ENCODE measurements at regions of chr18 and their contacts with region 1.

Region 1: GRCh38 chr18:70195852-70196434 is 9.5 kb downstream of the RTTN start:
- DNase-seq: peak in 4 of 14 experiments; percentile 19 to 49 (median 38)
- ATAC-seq: peak; percentile 52
- H3K4me3 ChIP-seq: no peak overlapping the region
- H3K4me3 Mint-ChIP-seq: no peak overlapping the region
- H3K27ac ChIP-seq: no peak overlapping the region
- H3K27ac Mint-ChIP-seq: no peak overlapping the region
- H3K4me1 ChIP-seq: no peaks in the 10 kb centered on the region
- H3K4me1 Mint-ChIP-seq: peaks cover 12% of the 10 kb centered on the region
- H3K27me3 ChIP-seq: no peaks in the 10 kb centered on the region
- H3K27me3 Mint-ChIP-seq: no peaks in the 10 kb centered on the region
- CTCF ChIP-seq: peak; percentile 69

Region 2: GRCh38 chr18:70154591-70155194 is 41.2 kb before region 1 on chr18:
- CTCF ChIA-PET with region 1: no interaction called
- POLR2A ChIA-PET with region 1: no interaction called
- intact Hi-C with region 1: no loop called
- DNase-seq: no peak
- ATAC-seq: no peak
- H3K4me3 ChIP-seq: no peak overlapping the region
- H3K4me3 Mint-ChIP-seq: no peak overlapping the region
- H3K27ac ChIP-seq: no peak overlapping the region
- H3K27ac Mint-ChIP-seq: no peak overlapping the region
- H3K4me1 ChIP-seq: no peaks in the 10 kb centered on the region
- H3K4me1 Mint-ChIP-seq: peaks cover 13% of the 10 kb centered on the region
- H3K27me3 ChIP-seq: no peaks in the 10 kb centered on the region
- H3K27me3 Mint-ChIP-seq: no peaks in the 10 kb centered on the region
- CTCF ChIP-seq: no peak

Region 3: GRCh38 chr18:70421471-70422390 is 225.8 kb after region 1 on chr18:
- CTCF ChIA-PET with region 1: no interaction called
- POLR2A ChIA-PET with region 1: no interaction called
- intact Hi-C with region 1: no loop called
- DNase-seq: peak in 3 of 14 experiments; percentile 18 to 68 (median 61)
- ATAC-seq: no peak
- H3K4me3 ChIP-seq: no peak overlapping the region
- H3K4me3 Mint-ChIP-seq: no peak overlapping the region
- H3K27ac ChIP-seq: no peak overlapping the region
- H3K27ac Mint-ChIP-seq: no peak overlapping the region
- H3K4me1 ChIP-seq: peaks cover 2% of the 10 kb centered on the region
- H3K4me1 Mint-ChIP-seq: no peaks in the 10 kb centered on the region
- H3K27me3 ChIP-seq: no peaks in the 10 kb centered on the region
- H3K27me3 Mint-ChIP-seq: peaks cover 8% of the 10 kb centered on the region
- CTCF ChIP-seq: no peak

Region 4: GRCh38 chr18:70454704-70455322 is 258.9 kb after region 1 on chr18:
- CTCF ChIA-PET with region 1: interaction called, 3 read pairs
- POLR2A ChIA-PET with region 1: no interaction called
- intact Hi-C with region 1: loop called (anchors 1 to 5 kb)
- DNase-seq: peak in 4 of 14 experiments; percentile 26 to 66 (median 51)
- ATAC-seq: peak; percentile 52
- H3K4me3 ChIP-seq: no peak overlapping the region
- H3K4me3 Mint-ChIP-seq: no peak overlapping the region
- H3K27ac ChIP-seq: no peak overlapping the region
- H3K27ac Mint-ChIP-seq: no peak overlapping the region
- H3K4me1 ChIP-seq: no peaks in the 10 kb centered on the region
- H3K4me1 Mint-ChIP-seq: no peaks in the 10 kb centered on the region
- H3K27me3 ChIP-seq: no peaks in the 10 kb centered on the region
- H3K27me3 Mint-ChIP-seq: peaks cover 7% of the 10 kb centered on the region
- CTCF ChIP-seq: peak; percentile 62